ENCODE measurements at regions of chr5 and their contacts with region 1.

Region 1: DNA sequence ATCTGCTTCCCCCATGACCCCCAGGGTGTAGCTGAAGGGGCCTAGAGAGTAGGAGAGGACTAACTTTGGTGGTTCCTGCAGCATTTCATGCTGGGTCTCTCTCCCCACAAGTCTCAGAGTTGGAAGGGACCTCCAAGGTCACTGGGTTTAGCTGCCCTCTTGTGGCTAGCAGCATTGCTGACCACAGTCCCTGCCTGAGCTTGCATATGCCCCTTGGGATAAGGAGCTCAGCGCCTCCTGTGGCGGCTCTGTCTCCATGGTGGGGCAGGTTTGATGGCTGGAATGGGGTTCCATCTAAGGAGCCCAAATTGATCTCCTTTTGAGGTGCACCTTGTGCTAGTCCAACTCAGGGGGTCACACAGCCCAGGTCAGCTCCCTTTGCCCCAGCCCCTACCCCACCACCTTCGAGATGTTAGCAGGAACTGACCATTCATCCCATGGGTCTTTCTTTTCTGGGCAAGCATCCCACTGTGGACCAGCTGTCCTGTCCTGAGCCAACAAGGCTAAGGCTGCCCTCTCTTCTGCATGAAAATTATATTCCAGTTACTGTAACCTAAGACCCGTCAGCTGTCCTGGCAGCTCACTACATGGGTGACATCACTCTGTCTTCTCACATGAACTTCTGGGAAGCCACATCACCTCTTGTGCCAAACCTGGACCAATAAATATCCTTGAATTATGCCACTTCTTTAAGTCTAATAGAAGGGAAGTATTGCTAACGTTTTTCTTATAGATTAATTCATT is 196.2 kb downstream of the HSPA4 start:
- DNase-seq: no peak
- ATAC-seq: peak; percentile 67
- H3K4me3 ChIP-seq: no peak overlapping the region
- H3K27ac ChIP-seq: no peak overlapping the region
- H3K4me1 ChIP-seq: peaks cover 29% of the 10 kb centered on the region
- H3K27me3 ChIP-seq: no peaks in the 10 kb centered on the region
- CTCF ChIP-seq: peak; percentile 89

Region 2: DNA sequence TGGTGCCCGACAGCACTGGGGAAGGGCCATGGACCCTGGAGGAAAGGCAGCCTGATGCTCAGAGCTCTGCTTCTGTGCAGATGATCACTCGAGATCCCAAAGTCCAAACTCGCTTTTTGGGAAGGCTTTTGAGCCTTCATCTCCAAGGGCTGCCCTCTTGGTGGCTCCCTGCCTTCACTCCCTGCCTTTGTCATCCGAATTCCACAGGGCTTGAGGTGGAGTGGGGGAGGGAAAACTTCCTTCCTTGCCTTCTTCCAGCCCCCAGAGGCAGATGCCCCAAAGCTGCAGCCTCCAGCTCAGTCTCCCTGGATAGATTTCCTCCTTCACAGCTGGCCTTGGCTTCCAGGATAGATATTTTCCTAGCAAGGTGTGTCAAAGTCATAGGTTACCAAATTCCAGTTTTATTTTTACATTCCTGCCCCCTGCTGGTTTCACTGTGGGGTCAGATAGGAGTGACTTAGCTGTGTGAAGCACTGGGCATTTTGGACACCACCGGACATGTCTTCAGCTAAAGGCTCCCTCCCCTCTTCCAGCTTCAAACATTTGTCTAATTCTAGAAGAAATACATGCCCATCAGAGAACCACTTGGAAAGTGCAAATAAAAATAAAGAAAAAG is 72.0 kb after region 1 on chr5:
- CTCF ChIA-PET with region 1: interaction called, 10 read pairs
- POLR2A ChIA-PET with region 1: interaction called, 3 read pairs
- in situ Hi-C with region 1: no loop called
- intact Hi-C with region 1: no loop called
- DNase-seq: no peak
- ATAC-seq: no peak
- H3K4me3 ChIP-seq: no peak overlapping the region
- H3K27ac ChIP-seq: no peak overlapping the region
- H3K4me1 ChIP-seq: no peaks in the 10 kb centered on the region
- H3K27me3 ChIP-seq: no peaks in the 10 kb centered on the region
- CTCF ChIP-seq: no peak

Measured in Panc1 (cell line).